Dorsolateral prefrontal cortex (tissue), 120 donors: ENCODE measurements at regions of chr2 and their contacts with region 1.

Region 1: DNA sequence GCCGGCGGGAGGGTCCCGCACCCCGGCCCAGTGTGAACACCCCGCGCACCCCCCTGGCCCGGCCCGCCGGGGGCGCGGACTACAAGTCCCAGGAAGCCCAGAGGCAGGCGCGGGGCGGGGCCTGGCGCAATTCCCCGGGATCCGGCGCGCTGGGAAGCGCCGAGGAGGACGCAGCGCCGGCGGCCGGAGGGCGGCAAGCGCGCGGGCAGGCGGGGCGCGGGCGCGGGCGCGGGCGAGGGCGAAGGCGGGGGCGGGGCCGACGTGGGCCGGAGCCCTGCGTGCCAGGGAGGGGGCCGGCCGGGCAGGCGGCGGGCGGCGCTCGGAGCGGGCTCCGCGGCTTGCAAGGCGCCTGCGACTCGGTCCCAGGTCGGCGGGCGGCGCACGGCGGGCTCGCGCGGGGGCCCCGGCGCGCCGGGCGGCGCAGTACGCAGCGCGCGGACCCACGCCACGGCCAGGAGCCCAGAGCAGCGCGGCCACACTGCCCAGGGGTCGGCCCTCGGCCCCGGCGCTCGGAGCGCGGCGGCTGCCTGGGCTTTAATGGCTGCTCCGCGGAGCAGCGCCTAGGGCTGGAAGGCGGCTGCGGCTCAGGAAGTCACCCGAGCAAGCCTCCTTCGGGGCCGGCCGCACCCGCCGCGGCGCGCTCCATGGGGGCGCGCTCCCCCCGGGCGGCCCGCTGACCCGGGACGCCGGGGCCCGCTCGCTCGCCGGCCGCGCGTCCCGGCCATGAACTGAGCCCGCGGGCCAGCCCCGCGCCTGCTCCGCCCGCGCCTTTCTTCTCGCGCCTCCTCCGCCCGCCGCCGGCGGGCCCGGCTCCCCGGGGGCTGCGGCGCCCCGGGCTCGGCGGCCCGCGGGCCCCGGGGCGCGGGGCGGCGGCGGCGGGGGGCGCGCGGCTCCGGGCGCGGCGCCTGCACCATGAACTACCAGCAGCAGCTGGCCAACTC is at the start of gene AGAP1:
- DNase-seq: peak; percentile 83 to 94 (median 89)
- H3K4me3 ChIP-seq: peak within 1 kb of the TSS; percentile 58 to 85 (median 78)
- H3K27ac ChIP-seq: peak within 1 kb of the TSS in 57 of 59 donors; percentile 39 to 93 (median 81)
- H3K27me3 ChIP-seq: no peaks in the 10 kb centered on the region
- CTCF ChIP-seq: peak in 9 of 56 donors; percentile 11 to 41 (median 19)
- total RNA-seq, gene AGAP1: 141 to 246 (median 193) TPM

Region 2: DNA sequence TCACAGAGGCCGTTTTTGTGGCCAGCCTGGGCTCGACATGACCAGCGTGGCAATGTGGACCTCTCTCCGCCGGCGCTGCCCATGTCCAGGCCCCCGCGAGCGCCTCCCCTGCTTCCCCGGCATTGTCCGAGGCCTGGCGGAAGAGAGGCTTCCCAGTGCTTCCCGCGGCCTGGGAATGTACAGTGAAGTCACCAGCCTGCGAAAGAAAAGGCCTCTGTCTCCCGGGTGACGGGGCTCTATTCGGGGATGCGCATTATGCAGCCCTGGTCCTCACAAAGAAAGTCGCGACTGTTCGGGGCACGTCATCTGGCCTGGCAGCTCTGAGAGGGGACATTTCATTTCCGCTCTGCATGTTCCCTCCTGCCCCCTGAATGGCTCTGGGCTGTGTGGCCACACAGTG is 109.4 kb before region 1 on chr2:
- intact Hi-C with region 1: loop called (anchors 2 to 5 kb)
- DNase-seq: peak; percentile 35 to 91 (median 86)
- H3K4me3 ChIP-seq: peak overlapping the region in 32 of 59 donors; percentile 2 to 48 (median 22)
- H3K27ac ChIP-seq: peak overlapping the region in 58 of 59 donors; percentile 5 to 92 (median 84)
- H3K27me3 ChIP-seq: peaks cover 0 to 8% (median 0%) of the 10 kb centered on the region in 45 donors
- CTCF ChIP-seq: peak in 17 of 56 donors; percentile 10 to 49 (median 20)

Region 3: GRCh38 chr2:235416864-235417499 is 77.1 kb before region 1 on chr2:
- intact Hi-C with region 1: no loop called
- DNase-seq: no peak
- H3K4me3 ChIP-seq: no peak overlapping the region
- H3K27ac ChIP-seq: peak overlapping the region in 5 of 59 donors; percentile 13 to 61 (median 36)
- H3K27me3 ChIP-seq: no peaks in the 10 kb centered on the region
- CTCF ChIP-seq: no peak

Region 4: DNA sequence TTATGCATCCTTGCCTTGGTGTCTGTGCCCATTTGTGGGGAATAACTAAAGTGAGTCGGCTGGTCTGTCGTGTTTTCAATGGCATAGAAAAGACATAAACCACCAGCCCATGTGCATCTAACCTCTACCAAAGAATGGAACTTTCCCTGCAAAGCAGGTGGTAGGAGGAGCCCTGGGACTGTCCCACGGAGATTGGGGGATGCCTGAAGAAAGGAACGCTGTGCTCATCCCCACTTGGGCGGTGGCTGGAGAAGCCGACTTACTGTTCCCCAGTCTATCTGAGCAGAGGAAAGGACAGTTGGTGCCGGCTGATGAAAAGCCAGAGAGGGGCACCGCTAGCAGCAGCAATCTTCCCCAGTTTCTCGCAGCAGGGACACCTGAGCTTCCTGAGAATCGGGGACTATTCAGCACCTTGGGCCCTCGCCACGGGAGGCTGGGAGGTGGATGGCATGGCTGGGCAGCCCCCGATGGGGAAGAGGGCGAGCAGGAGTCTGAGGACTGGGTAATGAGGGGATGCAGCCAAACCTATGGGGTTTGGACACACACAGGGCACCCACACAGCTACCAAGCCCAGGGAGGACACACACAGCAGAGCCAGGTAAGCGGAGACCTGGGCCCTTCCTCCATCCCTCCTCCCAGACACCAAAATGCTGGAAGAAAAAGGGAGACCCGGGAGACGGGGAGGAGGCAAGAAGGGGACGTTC is 53.9 kb before region 1 on chr2:
- intact Hi-C with region 1: loop called in 1 of 2 experiments (anchors 5 kb)
- DNase-seq: no peak
- H3K4me3 ChIP-seq: no peak overlapping the region
- H3K27ac ChIP-seq: peak overlapping the region in 23 of 59 donors; percentile 0 to 71 (median 27)
- H3K27me3 ChIP-seq: no peaks in the 10 kb centered on the region
- CTCF ChIP-seq: no peak

Region 5: DNA sequence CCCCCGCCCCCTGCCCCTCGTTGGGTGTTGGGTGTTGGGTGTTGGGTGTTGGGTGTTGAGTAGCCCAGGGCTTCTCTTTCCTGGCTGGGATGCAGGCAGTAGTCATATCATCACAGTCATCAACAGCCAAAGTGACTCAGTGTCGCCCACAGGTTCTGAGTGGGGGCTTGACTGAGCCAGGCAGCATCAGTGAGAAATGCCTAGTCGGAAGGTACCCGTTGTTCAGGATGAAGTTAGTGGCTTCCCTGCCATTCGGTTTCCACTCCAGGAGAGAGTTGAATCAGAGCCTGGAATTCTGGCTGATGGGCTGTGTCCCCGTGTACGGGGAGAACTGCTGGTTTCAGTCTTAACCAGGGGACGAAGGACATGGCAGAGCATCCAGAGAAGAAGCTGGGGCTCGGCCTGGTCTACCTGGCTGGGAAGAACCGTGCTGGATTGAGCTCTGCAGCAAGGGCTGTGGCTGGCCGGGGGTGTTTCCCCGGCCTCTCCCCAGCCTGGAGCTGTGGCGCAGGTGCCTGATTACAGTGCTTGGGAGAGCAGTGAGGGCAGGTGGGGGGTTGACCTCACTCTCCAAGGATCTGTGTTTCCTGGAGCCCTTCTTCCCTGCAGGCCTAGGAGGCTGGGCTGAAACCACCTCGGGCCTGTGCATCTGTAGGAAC is 49.2 kb after region 1 on chr2:
- intact Hi-C with region 1: loop called in 1 of 2 experiments (anchors 5 kb)
- DNase-seq: peak in 7 of 10 donors; percentile 53 to 81 (median 63)
- H3K4me3 ChIP-seq: no peak overlapping the region
- H3K27ac ChIP-seq: peak overlapping the region in 13 of 59 donors; percentile 14 to 72 (median 46)
- H3K27me3 ChIP-seq: no peaks in the 10 kb centered on the region
- CTCF ChIP-seq: no peak

Region 6: DNA sequence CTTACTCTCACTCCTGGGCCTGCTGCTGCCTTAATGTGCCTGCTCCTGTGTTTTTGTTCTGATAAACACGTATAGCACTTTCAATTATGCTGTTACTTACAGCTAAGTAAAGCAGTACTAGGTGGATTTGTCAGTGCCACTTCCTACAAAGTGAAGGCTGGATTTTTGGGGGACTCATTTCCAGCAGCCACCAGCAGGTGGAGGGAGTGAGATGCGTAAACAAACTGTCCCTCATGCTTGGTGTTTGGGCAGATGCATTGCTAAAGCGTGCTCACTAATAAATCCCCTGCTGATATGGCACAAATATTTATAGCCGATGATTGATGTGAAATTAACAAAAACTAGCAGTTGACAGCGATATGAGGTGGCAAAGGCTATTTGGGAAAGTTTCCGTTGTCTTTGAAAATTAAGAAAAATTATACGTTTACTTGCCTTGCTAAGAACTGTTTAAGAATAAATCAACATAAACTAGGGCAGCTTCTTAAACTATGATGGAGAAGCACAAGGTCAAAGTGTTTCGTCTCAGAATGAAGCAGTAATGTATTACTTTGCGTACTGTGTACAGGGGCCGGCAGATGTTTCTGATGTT is 101.5 kb after region 1 on chr2:
- intact Hi-C with region 1: loop called in 1 of 2 experiments (anchors 5 kb)
- DNase-seq: peak; percentile 73 to 94 (median 80)
- H3K4me3 ChIP-seq: peak overlapping the region in 1 of 59 donors; percentile 4
- H3K27ac ChIP-seq: peak overlapping the region in 46 of 59 donors; percentile 5 to 82 (median 62)
- H3K27me3 ChIP-seq: no peaks in the 10 kb centered on the region
- CTCF ChIP-seq: peak; percentile 80 to 99 (median 94)

Region 7: DNA sequence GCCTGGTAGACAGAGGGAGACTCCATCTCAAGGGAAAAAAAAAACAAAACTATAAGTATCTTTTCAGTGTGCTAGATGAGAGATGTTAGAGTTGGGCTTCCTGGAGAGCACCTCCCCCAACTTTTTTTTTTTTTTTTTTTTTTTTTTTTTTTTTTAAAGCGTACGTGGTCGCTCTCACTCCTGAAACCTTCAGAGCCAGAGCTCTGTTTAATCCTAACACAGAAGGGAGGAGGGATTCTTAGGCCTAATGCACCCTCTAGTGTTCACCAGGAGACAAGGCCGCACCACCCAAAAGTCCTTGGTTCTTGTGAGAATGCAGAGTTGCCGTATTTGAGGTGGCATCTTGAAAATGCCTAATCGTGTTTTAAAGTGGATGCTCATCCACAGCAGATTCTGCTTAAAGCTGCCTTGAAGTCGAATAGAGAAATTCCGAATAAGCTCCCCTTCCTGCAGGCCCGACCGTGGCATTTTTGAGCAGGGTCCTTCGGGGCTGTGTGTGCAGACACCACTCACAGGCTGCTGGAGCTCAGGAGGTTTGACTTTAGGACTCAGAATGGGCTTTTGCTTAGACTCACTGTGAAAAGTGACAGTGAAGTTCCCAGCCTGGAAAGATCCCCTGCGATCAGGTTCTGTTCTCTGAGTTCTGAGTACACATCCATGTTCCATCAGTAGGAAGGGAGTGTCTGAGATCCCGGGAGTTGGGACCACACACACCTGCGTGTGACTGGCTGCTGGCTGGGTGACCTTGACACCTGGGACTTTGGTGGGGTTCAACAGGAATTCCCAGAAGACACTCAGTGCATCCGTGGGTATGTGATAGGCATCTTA is 252.4 kb after region 1 on chr2:
- intact Hi-C with region 1: loop called (anchors 5 to 10 kb)
- DNase-seq: peak in 5 of 10 donors; percentile 62 to 84 (median 76)
- H3K4me3 ChIP-seq: no peak overlapping the region
- H3K27ac ChIP-seq: peak overlapping the region in 25 of 59 donors; percentile 2 to 72 (median 48)
- H3K27me3 ChIP-seq: no peaks in the 10 kb centered on the region
- CTCF ChIP-seq: peak; percentile 47 to 93 (median 85)